ENCODE measurements at regions of chr11 and their contacts with region 1.

Region 1: DNA sequence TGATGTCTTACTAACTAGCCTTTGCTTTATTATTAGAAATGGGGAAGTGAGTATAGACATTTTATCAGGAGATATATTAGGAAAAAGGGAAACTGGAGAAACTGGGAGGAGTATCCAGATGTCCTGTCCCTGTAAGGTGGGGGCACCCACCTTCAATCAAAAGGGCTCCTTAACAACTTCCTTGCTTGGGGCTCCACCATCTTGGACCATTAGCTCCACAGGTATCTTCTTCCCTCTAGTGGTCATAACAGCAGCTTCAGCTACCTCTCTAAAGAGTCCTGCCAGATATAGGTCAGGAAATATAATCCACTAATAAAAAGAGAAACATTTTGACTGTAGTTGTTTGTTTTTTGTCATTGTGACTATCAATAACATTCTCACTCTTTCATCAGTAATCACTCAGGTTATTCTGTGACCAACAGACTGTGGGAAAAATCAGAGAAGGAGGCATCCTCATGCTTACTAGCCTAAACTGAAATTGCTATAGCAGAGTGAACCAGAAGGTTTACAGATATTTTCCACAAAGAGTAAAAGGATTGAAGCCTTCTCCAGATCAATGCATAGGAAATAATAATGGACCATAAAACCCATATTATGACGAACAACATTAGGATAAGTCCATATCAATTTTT is 10.4 kb downstream of the OR51B4 start:
- DNase-seq: peak; percentile 5
- H3K4me3 Mint-ChIP-seq: no peak overlapping the region
- H3K27ac Mint-ChIP-seq: no peak overlapping the region
- H3K4me1 Mint-ChIP-seq: no peaks in the 10 kb centered on the region
- H3K27me3 Mint-ChIP-seq: no peaks in the 10 kb centered on the region
- CTCF ChIP-seq: peak; percentile 52

Region 2: GRCh38 chr11:5123802-5124521 is 167.4 kb before region 1 on chr11:
- CTCF ChIA-PET with region 1: no interaction called
- intact Hi-C with region 1: loop called (anchors 2 kb)
- DNase-seq: peak; percentile 68
- H3K4me3 Mint-ChIP-seq: no peak overlapping the region
- H3K27ac Mint-ChIP-seq: no peak overlapping the region
- H3K4me1 Mint-ChIP-seq: no peaks in the 10 kb centered on the region
- H3K27me3 Mint-ChIP-seq: peaks cover 23% of the 10 kb centered on the region
- CTCF ChIP-seq: peak; percentile 54

Region 3: GRCh38 chr11:5204787-5205186 is 86.5 kb before region 1 on chr11:
- CTCF ChIA-PET with region 1: no interaction called
- intact Hi-C with region 1: loop called (anchors 2 kb)
- DNase-seq: peak; percentile 22
- H3K4me3 Mint-ChIP-seq: no peak overlapping the region
- H3K27ac Mint-ChIP-seq: no peak overlapping the region
- H3K4me1 Mint-ChIP-seq: no peaks in the 10 kb centered on the region
- H3K27me3 Mint-ChIP-seq: no peaks in the 10 kb centered on the region
- CTCF ChIP-seq: peak; percentile 53

Region 4: DNA sequence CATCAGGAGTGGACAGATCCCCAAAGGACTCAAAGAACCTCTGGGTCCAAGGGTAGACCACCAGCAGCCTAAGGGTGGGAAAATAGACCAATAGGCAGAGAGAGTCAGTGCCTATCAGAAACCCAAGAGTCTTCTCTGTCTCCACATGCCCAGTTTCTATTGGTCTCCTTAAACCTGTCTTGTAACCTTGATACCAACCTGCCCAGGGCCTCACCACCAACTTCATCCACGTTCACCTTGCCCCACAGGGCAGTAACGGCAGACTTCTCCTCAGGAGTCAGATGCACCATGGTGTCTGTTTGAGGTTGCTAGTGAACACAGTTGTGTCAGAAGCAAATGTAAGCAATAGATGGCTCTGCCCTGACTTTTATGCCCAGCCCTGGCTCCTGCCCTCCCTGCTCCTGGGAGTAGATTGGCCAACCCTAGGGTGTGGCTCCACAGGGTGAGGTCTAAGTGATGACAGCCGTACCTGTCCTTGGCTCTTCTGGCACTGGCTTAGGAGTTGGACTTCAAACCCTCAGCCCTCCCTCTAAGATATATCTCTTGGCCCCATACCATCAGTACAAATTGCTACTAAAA is 64.5 kb before region 1 on chr11 and contains the start of gene HBB:
- CTCF ChIA-PET with region 1: no interaction called
- intact Hi-C with region 1: no loop called
- DNase-seq: no peak
- H3K4me3 Mint-ChIP-seq: no peak within 1 kb of the TSS
- H3K27ac Mint-ChIP-seq: no peak within 1 kb of the TSS
- H3K4me1 Mint-ChIP-seq: no peaks in the 10 kb centered on the region
- H3K27me3 Mint-ChIP-seq: no peaks in the 10 kb centered on the region
- CTCF ChIP-seq: no peak
- total RNA-seq, gene HBB: not detected in 2 replicates